ENCODE measurements at regions of chrX and their contacts with region 1.

Region 1: GRCh38 chrX:154762523-154763289 is at the start of gene DKC1:
- DNase-seq: peak; percentile 99
- total RNA-seq, gene DKC1: 21.6 to 26.5 TPM

Region 2: GRCh38 chrX:152904151-152905080 is 1858.3 kb before region 1 on chrX:
- intact Hi-C with region 1: loop called in 1 of 2 experiments (anchors 5 kb)
- DNase-seq: no peak

Region 3: DNA sequence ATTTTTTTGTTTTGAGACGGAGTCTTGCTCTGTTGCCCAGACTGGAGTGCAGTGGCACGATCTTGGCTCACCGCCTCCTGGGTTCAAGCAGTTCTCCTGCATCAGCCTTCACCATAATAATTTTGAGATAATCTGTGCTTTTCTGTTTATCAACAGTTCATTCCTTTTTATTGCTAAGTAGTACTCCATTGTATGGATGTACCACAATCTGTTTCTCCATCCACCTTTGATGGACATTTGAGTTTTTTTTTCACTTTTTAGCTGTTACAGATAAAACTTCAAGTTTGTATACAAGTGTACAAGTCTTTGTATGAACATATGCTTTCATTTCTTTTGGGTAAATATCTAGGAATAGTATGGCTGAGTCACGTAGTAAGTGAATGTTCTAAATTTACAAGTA is 273.0 kb after region 1 on chrX:
- intact Hi-C with region 1: loop called in 1 of 2 experiments (anchors 5 kb)
- DNase-seq: no peak